Activated CD8-positive, alpha-beta T cell treated with anti-CD3 and anti-CD28 coated beads for 36 hours (primary cell): ENCODE measurements at regions of chr10 and their contacts with region 1.

Region 1: DNA sequence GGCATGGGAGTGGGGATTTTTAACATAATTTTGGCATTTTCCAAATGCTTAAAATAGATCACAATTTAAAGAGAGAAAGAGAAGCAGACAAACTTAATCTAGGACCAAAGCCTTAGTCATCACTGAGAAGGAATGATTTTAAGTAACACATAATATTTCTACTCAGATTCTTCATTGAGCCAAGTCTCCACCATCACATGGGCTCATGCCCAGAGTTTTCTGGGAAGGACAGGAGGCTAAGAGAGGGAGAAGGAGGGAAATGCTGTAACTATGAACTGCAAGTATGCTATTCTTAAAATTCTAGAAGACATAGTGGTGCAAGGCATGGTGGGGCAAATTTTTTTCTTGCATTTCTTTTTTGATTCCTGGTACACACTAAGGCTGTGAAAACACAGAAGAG is 23.8 kb upstream of the UBE2D1 start:
- DNase-seq: no peak
- ATAC-seq: no peak
- H3K4me3 Mint-ChIP-seq: no peak overlapping the region
- H3K27ac Mint-ChIP-seq: no peak overlapping the region
- H3K4me1 Mint-ChIP-seq: no peaks in the 10 kb centered on the region
- H3K27me3 Mint-ChIP-seq: peaks cover 15% of the 10 kb centered on the region
- CTCF ChIP-seq: no peak

Region 2: DNA sequence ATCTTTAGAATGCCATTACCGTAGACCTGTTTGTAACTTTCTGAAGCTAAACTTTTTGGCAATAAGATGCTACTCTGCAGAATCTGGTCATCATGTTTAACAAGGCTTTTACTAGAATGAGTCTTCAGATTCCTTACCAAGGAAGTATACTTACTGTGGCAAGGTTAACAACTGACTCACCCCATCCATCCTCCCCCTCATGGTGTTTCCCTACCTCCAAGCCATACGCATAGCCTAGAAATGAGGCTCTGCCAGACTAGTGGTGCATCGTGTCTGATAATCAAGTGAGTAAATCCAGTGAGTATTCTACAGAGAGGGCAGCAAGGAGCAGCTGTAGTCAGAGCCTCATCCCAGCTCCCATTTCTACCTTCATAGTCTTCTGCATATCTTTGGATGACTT is 267.0 kb before region 1 on chr10:
- CTCF ChIA-PET with region 1: no interaction called
- POLR2A ChIA-PET with region 1: no interaction called
- intact Hi-C with region 1: no loop called
- DNase-seq: no peak
- ATAC-seq: no peak
- H3K4me3 Mint-ChIP-seq: no peak overlapping the region
- H3K27ac Mint-ChIP-seq: no peak overlapping the region
- H3K4me1 Mint-ChIP-seq: no peaks in the 10 kb centered on the region
- H3K27me3 Mint-ChIP-seq: peaks cover 1% of the 10 kb centered on the region
- CTCF ChIP-seq: no peak

Region 3: GRCh38 chr10:58299580-58299979 is 11.4 kb before region 1 on chr10:
- CTCF ChIA-PET with region 1: interaction called, 13 read pairs
- POLR2A ChIA-PET with region 1: no interaction called
- intact Hi-C with region 1: no loop called
- DNase-seq: peak; percentile 74
- ATAC-seq: peak; percentile 83
- H3K4me3 Mint-ChIP-seq: no peak overlapping the region
- H3K27ac Mint-ChIP-seq: no peak overlapping the region
- H3K4me1 Mint-ChIP-seq: peaks cover 2% of the 10 kb centered on the region
- H3K27me3 Mint-ChIP-seq: peaks cover 10% of the 10 kb centered on the region
- CTCF ChIP-seq: peak; percentile 85